Posterior cingulate gyrus (tissue), 11 donors: ENCODE measurements at regions of chr13 and their contacts with region 1.

Region 1: GRCh38 chr13:102915393-102915930 is 69.6 kb downstream of the ERCC5 start:
- DNase-seq: no peak

Region 2: DNA sequence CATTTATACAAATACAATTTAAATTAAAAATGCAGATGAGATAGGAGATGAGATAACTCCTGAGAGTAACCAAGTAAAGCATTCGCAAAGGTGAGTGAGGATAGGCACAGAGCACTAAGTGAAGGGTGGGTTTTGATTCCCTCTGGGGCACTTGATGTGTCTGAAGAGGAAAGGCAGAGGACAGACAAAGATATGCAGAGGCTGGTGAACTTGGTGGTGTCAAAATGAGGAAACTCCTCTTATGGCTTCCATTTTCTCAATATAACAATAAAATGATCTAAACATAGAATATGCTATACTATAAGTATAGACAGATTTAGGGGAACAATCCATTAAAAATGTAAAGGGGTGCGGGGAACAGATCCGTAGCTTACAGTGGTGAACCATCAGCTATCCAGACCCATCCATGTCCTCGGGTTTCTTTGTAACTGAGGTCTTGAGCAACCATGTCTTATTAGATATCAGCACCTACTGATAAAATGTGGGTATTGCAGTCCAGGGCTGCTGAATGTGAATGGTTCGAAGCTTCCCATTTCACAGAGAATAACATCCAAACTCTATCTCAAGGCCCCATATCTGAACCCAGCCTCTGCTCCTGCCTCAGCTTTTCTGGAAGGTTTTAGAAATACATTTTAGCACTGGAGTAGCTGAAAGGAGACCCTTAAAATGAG is 224.7 kb after region 1 on chr13:
- intact Hi-C with region 1: loop called (anchors 5 kb)
- DNase-seq: no peak